B cell (primary cell): ENCODE measurements at regions of chr9 and their contacts with region 1.

Region 1: DNA sequence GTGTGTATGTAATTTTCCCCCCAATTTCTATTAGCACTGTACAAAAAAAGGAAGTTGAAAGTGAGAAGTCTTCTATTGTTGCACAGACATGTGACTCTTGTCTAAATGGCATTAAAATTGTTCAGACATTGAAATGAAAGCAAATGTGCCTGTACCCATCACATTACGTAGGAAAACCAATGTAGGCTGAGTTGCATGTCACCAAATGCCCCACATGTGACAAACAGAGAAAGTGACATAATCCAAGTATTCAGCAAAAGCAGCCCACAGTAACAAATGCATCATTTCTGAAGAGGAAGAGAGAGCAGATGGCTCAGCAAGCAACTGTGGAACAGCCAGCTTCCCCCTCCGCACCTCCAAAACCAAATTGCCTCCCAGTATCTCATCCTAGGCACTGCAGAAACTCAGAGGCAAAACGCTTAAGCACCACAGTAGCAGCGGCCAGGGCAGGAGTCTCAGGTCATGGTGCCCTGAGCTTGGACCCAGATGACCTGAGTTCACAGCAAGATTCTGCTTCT is 161.4 kb upstream of the NR4A3 start:
- DNase-seq: peak; percentile 90
- ATAC-seq: peak; percentile 93
- H3K4me3 ChIP-seq: peak overlapping the region in 3 of 5 experiments; percentile 12 to 40 (median 22)
- H3K4me3 Mint-ChIP-seq: peak overlapping the region; percentile 55
- H3K27ac ChIP-seq: peak overlapping the region; percentile 59 to 80
- H3K27ac Mint-ChIP-seq: peak overlapping the region; percentile 92
- H3K4me1 ChIP-seq: peaks cover 14 to 16% of the 10 kb centered on the region in 2 donors
- H3K4me1 Mint-ChIP-seq: peaks cover 22% of the 10 kb centered on the region
- H3K27me3 ChIP-seq: no peaks in the 10 kb centered on the region
- H3K27me3 Mint-ChIP-seq: no peaks in the 10 kb centered on the region
- CTCF ChIP-seq: no peak

Region 2: DNA sequence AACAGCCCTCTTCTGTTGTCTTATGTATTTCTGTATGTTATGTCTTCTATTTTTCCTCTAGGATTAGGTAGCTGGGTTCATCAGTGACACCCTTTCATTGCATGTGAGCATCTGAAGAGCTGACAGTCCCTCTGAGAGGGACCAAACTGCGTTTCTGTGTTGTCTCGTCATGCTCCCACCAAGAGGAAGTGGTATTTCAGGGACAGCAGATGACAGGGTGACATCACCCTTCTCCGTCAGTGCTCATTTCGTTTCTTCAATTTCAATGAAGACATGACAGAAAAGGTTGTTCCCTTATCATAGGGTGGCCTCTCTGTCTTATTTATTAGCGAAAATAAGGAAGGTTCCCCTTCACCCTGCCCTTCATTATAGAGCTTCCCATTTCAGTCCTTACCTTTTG is 64.5 kb before region 1 on chr9:
- CTCF ChIA-PET with region 1: no interaction called
- POLR2A ChIA-PET with region 1: no interaction called
- intact Hi-C with region 1: loop called (anchors 5 kb)
- DNase-seq: peak; percentile 85
- ATAC-seq: peak; percentile 68
- H3K4me3 ChIP-seq: no peak overlapping the region
- H3K4me3 Mint-ChIP-seq: peak overlapping the region; percentile 53
- H3K27ac ChIP-seq: peak overlapping the region in 1 of 2 donors; percentile 38
- H3K27ac Mint-ChIP-seq: peak overlapping the region; percentile 84
- H3K4me1 ChIP-seq: peaks cover 29% of the 10 kb centered on the region in 2 donors
- H3K4me1 Mint-ChIP-seq: peaks cover 52% of the 10 kb centered on the region
- H3K27me3 ChIP-seq: no peaks in the 10 kb centered on the region
- H3K27me3 Mint-ChIP-seq: no peaks in the 10 kb centered on the region
- CTCF ChIP-seq: no peak

Region 3: GRCh38 chr9:99762470-99762869 is 102.2 kb after region 1 on chr9:
- CTCF ChIA-PET with region 1: no interaction called
- POLR2A ChIA-PET with region 1: no interaction called
- intact Hi-C with region 1: loop called (anchors 2 kb)
- DNase-seq: peak; percentile 70
- ATAC-seq: peak; percentile 96
- H3K4me3 ChIP-seq: peak overlapping the region in 2 of 5 experiments; percentile 12 to 27
- H3K4me3 Mint-ChIP-seq: no peak overlapping the region
- H3K27ac ChIP-seq: peak overlapping the region; percentile 68 to 74
- H3K27ac Mint-ChIP-seq: no peak overlapping the region
- H3K4me1 ChIP-seq: peaks cover 13 to 18% of the 10 kb centered on the region in 2 donors
- H3K4me1 Mint-ChIP-seq: no peaks in the 10 kb centered on the region
- H3K27me3 ChIP-seq: no peaks in the 10 kb centered on the region
- H3K27me3 Mint-ChIP-seq: no peaks in the 10 kb centered on the region
- CTCF ChIP-seq: no peak